Activated T-helper 2 cell treated with anti-CD3 and anti-CD28 coated beads, Interferon-gamma antibody, Interleukin-2, Interleukin-4, amounts not matched to agents 10 μg/mL and 5 μg/mL and 100 μg/mL, durations not matched to agents 14 hours and 24 hours and 36 hours (primary cell): ENCODE measurements at regions of chr5 and their contacts with region 1.

Region 1: GRCh38 chr5:40386289-40386688 is 293.4 kb upstream of the PTGER4 start:
- DNase-seq: no peak
- H3K4me3 Mint-ChIP-seq: no peak overlapping the region
- H3K27ac Mint-ChIP-seq: peak overlapping the region; percentile 42
- H3K4me1 Mint-ChIP-seq: peaks cover 88% of the 10 kb centered on the region
- H3K27me3 Mint-ChIP-seq: no peaks in the 10 kb centered on the region

Region 2: GRCh38 chr5:39714036-39714698 is 672.1 kb before region 1 on chr5:
- intact Hi-C with region 1: loop called (anchors 10 kb)
- DNase-seq: no peak
- H3K4me3 Mint-ChIP-seq: no peak overlapping the region
- H3K27ac Mint-ChIP-seq: no peak overlapping the region
- H3K4me1 Mint-ChIP-seq: no peaks in the 10 kb centered on the region
- H3K27me3 Mint-ChIP-seq: peaks cover 10% of the 10 kb centered on the region

Region 3: DNA sequence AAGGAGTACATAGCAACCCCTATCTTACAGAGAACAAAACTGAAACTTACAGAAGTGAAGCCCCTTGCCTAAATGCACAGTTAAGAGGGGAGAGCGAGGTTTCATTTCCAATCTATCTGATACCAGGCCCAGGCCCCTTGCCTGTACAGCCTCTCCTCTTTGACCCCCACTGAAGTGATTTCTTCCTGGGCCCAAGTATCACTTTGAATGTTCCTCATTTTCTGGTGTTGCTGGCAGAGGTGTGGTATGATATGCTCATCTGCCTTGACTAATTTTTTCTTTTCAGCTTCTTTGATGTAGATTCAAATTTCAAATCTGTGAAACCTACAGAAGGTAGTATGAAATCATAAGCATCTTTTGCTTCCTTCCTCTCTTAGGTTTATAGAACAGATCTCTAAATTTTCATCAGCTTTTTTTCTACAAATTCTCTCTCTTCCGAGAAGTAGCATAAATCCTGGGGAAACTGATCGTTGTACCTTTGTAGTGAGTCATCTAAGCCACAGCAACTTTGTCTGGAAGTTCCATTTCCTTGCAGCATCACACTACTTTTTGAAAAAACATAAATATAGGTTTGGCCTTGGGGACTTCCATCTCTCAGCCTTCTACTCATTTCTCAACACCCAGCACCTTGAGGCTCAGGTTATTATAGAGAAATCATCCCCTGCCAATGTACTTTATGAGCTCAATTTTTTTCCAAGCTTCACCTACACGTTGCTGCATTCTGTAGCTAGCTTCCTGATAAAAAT is 109.0 kb before region 1 on chr5:
- intact Hi-C with region 1: loop called (anchors 1 kb)
- DNase-seq: peak; percentile 22
- H3K4me3 Mint-ChIP-seq: peak overlapping the region; percentile 5
- H3K27ac Mint-ChIP-seq: peak overlapping the region; percentile 87
- H3K4me1 Mint-ChIP-seq: peaks cover 53% of the 10 kb centered on the region
- H3K27me3 Mint-ChIP-seq: no peaks in the 10 kb centered on the region

Region 4: DNA sequence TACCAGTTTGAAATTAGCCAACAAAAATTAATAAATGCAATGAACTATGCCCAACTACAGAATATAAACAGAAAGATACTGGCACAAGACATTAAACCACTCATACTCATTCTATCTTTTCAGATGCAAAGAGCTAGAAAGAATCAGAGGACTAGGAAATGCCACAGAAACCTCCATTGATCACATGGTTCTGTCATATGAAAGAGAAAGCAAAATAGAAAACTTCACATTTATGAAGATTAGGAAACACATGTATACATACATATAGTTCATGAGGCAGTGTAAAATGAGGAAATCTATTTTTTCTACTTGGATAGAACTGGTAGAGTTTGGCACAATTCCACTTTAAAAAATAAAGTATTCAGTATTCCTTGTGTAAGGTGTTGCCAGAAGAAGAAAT is 18.3 kb after region 1 on chr5:
- intact Hi-C with region 1: loop called (anchors 1 kb)
- DNase-seq: no peak
- H3K4me3 Mint-ChIP-seq: peak overlapping the region; percentile 37
- H3K27ac Mint-ChIP-seq: peak overlapping the region; percentile 84
- H3K4me1 Mint-ChIP-seq: peaks cover 77% of the 10 kb centered on the region
- H3K27me3 Mint-ChIP-seq: no peaks in the 10 kb centered on the region

Region 5: GRCh38 chr5:40437452-40437861 is 51.2 kb after region 1 on chr5:
- intact Hi-C with region 1: loop called (anchors 1 kb)
- DNase-seq: no peak
- H3K4me3 Mint-ChIP-seq: no peak overlapping the region
- H3K27ac Mint-ChIP-seq: peak overlapping the region; percentile 77
- H3K4me1 Mint-ChIP-seq: peaks cover 74% of the 10 kb centered on the region
- H3K27me3 Mint-ChIP-seq: no peaks in the 10 kb centered on the region

Region 6: DNA sequence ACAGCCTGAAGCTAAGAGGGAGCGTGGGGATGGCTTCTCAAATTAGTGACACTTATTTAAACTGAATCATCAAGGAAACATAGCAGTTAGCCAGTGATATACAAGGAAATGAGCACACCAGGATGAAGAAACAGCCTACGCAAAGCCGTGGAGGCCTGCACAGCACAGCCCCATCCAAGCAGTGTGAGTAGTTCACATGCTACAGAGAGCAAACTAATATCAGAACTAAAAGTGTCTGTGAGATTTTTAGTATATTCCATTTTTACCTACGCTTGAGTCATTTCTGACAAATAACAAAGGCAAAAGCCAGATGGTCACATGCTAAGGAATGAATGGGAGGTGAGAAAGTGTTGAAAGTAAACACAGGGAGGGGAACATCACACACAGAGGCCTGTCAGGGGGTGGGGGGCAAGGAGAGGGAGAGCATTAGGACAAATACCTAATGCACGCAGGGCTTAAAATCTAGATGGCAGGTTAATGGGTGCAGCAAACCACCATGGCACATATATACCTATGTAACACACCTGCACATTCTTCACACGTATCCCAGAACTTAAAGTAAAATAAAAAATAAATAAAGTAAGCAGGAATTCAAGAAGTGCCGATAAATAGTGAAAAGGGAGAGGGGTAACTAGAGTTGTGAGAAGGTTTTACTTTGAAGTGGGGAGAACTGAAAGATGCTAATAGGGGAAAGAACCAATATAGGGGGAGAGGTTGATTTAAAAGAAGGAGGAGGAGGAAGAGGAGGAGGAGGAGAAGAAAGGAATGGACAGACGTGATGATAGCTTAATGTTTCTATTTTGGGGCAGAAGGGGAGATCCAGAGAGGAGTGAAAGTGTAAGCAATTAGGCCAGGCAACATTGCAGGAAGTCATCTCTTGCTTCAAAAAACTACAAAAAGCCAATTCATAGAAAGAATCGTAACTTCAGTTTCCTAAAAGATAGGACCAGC is 192.5 kb after region 1 on chr5:
- intact Hi-C with region 1: loop called (anchors 1 kb)
- DNase-seq: peak; percentile 19
- H3K4me3 Mint-ChIP-seq: peak overlapping the region; percentile 59
- H3K27ac Mint-ChIP-seq: peak overlapping the region; percentile 87
- H3K4me1 Mint-ChIP-seq: peaks cover 36% of the 10 kb centered on the region
- H3K27me3 Mint-ChIP-seq: no peaks in the 10 kb centered on the region

Region 7: GRCh38 chr5:40736103-40736875 is 350.0 kb after region 1 on chr5:
- intact Hi-C with region 1: loop called (anchors 1 kb)
- DNase-seq: no peak
- H3K4me3 Mint-ChIP-seq: no peak overlapping the region
- H3K27ac Mint-ChIP-seq: peak overlapping the region; percentile 17
- H3K4me1 Mint-ChIP-seq: peaks cover 28% of the 10 kb centered on the region
- H3K27me3 Mint-ChIP-seq: no peaks in the 10 kb centered on the region